PC-3 (cell line): ENCODE measurements at regions of chr7 and their contacts with region 1.

Region 1: GRCh38 chr7:8217200-8218068 is 44.5 kb downstream of the ICA1 start:
- DNase-seq: peak; percentile 80
- ATAC-seq: peak; percentile 46
- H3K4me3 ChIP-seq: no peak overlapping the region
- H3K27ac ChIP-seq: no peak overlapping the region
- H3K4me1 ChIP-seq: no peaks in the 10 kb centered on the region
- H3K27me3 ChIP-seq: no peaks in the 10 kb centered on the region
- CTCF ChIP-seq: peak; percentile 75

Region 2: DNA sequence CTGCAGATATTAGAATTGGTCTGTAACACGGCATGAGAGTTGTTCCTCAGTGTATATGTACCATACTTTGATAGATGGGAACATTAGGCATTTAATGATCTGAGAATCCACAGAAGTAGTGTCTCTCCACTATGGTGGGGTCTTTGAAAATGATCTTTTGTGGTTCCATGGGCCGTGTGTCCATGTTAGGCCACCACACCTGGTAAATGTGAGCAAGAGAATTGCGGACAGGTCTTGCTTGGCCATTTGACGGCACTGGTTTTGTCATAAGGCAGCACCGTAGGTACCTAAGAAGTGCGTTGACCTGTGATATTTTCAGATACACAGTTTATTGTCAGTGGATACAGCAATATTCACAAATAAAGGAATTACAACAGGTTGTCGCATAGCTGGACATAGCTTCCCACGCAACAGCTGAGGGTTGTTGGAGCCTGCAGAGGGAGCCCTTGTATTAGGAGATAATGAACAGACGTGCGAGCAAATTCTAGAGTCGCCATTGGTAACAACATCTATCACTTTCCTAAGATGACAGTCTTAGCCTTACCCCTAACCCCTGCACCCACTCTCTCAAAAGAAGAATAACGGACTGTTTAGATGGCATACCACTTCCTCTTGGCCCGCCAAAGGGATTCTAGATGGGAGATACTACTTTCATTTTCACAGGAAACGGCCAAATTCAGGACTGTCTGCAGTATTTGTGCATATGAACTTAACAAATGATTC is 793.1 kb before region 1 on chr7:
- CTCF ChIA-PET with region 1: no interaction called
- POLR2A ChIA-PET with region 1: no interaction called
- intact Hi-C with region 1: loop called (anchors 1 kb)
- DNase-seq: peak; percentile 81
- ATAC-seq: peak; percentile 95
- H3K4me3 ChIP-seq: peak overlapping the region; percentile 65
- H3K27ac ChIP-seq: no peak overlapping the region
- H3K4me1 ChIP-seq: peaks cover 8% of the 10 kb centered on the region; the same call in 1 of the 2 replicates
- H3K27me3 ChIP-seq: no peaks in the 10 kb centered on the region
- CTCF ChIP-seq: peak; percentile 94

Region 3: GRCh38 chr7:7595451-7595850 is 622.0 kb before region 1 on chr7:
- CTCF ChIA-PET with region 1: no interaction called
- POLR2A ChIA-PET with region 1: no interaction called
- intact Hi-C with region 1: loop called (anchors 1 kb)
- DNase-seq: peak; percentile 62
- ATAC-seq: peak; percentile 61
- H3K4me3 ChIP-seq: no peak overlapping the region
- H3K27ac ChIP-seq: no peak overlapping the region
- H3K4me1 ChIP-seq: no peaks in the 10 kb centered on the region
- H3K27me3 ChIP-seq: no peaks in the 10 kb centered on the region
- CTCF ChIP-seq: peak; percentile 63

Region 4: GRCh38 chr7:7662527-7662926 is 554.9 kb before region 1 on chr7:
- CTCF ChIA-PET with region 1: no interaction called
- POLR2A ChIA-PET with region 1: no interaction called
- intact Hi-C with region 1: loop called (anchors 2 kb)
- DNase-seq: peak; percentile 13
- ATAC-seq: no peak; the same call in 1 of the 2 replicates
- H3K4me3 ChIP-seq: no peak overlapping the region
- H3K27ac ChIP-seq: no peak overlapping the region
- H3K4me1 ChIP-seq: no peaks in the 10 kb centered on the region
- H3K27me3 ChIP-seq: no peaks in the 10 kb centered on the region
- CTCF ChIP-seq: peak; percentile 58

Region 5: DNA sequence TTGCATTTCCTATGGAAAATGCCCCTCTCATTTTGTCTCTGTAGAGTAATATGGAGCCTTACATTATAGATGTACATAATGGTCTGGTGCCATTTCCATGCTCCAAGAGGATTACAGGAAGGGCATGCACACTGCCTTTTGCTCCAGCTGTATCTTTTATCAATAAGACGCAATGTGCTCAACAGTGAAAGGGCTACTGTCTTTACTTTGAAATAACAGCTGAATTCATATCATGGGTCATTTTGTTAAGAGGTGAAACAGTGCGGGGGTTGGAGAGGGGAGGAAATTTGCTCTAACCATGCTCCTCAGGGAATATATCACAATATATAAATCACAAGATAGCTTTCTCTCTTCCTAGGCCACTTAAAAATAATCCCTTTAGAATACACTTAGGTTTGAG is 33.2 kb before region 1 on chr7:
- CTCF ChIA-PET with region 1: no interaction called
- POLR2A ChIA-PET with region 1: no interaction called
- intact Hi-C with region 1: no loop called
- DNase-seq: no peak
- ATAC-seq: no peak
- H3K4me3 ChIP-seq: no peak overlapping the region
- H3K27ac ChIP-seq: no peak overlapping the region
- H3K4me1 ChIP-seq: no peaks in the 10 kb centered on the region
- H3K27me3 ChIP-seq: 0 out of 2 replicates have a peak, but pooled peaks cover 3% of the 10 kb centered on the region
- CTCF ChIP-seq: no peak